Left cardiac atrium (tissue), 4 donors: ENCODE measurements at regions of chr5 and their contacts with region 1.

Region 1: DNA sequence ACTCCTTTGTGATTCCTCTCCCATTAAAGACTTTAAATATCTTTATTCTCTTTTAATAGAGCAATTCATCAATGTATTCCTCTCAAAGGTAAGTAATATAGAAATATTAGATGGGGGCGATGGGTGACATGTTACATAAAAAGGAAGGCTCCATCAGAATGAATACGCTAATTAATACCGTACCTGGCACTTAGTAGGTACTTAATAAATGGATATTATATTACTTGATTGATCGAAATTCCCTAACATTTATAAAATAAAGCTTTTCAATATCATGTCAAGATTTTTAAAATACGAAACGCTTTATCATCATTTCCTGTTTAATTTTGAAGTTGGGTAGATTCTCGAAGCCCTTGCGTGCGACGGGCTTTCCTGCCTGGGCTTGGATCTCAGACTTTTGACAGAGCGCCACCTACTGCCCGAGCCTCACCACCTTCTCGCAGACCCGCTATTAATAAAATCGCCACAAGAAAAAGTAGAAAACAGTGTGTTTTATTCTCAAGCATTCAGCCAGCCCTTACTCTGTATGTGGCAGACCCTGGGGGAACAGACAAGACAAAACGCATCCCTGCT is 99.4 kb downstream of the C5orf15 start:
- DNase-seq: peak; percentile 85
- ATAC-seq: peak; percentile 75 to 81

Region 2: DNA sequence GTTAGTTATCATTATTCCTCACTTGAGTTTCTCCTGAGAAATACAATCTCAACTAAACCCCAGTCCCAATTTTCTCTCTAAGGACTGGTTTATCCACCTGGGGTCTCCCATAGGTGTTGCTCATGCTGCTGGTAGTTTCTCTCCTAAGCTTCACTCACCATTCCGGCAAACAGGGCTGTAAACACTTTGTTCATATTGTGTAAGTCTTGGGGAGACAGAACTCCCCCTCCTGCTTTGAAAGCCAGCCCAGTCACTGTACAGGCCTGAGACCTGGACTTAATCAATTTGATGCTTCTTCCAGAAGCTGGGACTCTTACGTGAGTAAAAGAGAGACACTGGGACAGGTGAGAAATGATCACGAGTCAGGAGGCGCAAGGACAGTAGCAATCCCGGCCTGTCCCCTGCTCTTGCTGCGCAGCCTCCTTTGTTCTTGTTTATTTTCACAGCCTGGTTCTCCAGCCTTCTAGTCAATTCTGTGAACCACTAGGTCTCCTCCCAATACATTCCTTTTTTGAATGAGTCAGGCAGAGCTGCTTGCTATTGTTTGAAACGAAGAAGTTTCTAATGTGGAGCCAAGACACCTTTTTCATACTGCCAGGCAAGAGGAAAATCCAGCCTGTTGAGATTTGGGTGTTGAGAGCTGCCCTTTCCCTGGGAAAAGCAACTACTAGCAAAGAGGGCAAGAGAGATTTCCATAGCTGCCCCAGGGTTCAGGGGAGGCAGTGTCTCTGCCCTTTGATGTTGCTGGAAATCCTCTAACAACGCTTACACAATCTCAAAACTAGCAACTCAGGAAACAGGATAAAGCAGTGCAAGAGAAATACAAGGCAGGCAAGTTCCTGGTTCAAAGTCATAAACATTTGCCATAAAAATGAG is 1029.4 kb before region 1 on chr5:
- intact Hi-C with region 1: no loop called
- DNase-seq: no peak
- ATAC-seq: peak in 1 of 2 donors; percentile 53

Region 3: GRCh38 chr5:133754575-133755169 is 114.4 kb before region 1 on chr5:
- intact Hi-C with region 1: loop called (anchors 5 to 10 kb)
- DNase-seq: no peak
- ATAC-seq: peak; percentile 50 to 57

Region 4: GRCh38 chr5:133773247-133774202 is 95.5 kb before region 1 on chr5:
- intact Hi-C with region 1: loop called in 1 of 2 experiments (anchors 5 kb)
- DNase-seq: no peak
- ATAC-seq: no peak

Region 5: DNA sequence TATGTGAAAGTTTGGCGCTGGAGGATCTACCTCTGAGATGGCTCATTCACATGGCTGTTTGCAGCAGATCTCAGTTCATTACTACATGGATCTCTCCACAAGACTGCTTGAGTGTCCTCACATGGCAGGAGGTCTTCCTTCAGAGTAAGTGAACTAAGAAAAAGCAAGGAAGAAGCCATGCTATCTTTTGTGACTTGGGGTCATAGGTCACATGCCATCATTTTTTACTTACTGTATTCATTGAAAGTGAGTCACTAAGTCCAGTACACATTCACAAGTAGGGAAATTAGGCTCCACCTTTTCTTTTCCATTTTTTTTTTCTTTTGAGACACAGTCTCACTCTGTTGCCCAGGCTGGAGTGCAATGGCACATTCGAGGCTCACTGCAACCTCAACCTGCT is 551.3 kb after region 1 on chr5:
- intact Hi-C with region 1: no loop called
- DNase-seq: no peak
- ATAC-seq: no peak